PC-3 (cell line): ENCODE measurements at regions of chr11 and their contacts with region 1.

Region 1: DNA sequence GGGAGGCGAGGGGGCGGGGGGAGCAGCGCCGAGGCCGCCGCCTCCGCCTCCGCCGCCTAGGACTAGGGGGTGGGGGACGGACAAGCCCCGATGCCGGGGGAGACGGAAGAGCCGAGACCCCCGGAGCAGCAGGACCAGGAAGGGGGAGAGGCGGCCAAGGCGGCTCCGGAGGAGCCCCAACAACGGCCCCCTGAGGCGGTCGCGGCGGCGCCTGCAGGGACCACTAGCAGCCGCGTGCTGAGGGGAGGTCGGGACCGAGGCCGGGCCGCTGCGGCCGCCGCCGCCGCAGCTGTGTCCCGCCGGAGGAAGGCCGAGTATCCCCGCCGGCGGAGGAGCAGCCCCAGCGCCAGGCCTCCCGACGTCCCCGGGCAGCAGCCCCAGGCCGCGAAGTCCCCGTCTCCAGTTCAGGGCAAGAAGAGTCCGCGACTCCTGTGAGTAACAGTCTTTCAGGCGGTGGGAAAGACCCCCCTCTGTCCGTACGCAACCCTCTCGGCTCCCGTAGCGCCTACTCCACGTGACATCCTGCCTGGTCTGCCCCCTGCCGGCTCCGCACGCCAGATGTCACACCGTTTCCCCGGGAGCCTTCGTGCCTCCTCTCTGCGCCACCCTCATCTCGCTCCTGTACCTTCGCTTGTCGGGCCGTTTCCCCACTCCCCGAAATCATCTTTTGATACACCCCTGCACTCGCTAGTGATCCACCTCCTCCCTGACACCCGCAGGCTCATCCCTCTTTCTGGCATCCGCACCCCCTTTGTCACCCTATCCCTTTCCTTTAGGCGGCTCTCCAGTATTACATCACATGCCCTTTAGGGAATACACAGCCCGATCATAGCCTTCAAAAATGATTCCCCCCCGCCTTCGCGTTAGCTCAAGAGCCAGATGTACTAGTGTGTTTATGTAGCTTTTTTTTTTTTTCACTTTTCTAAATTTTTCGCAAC is 598 bp downstream of the ZFP91 start:
- DNase-seq: peak; percentile 89
- ATAC-seq: peak; percentile 45
- H3K4me3 ChIP-seq: peak overlapping the region; percentile 83
- H3K27ac ChIP-seq: peak overlapping the region; percentile 89
- H3K4me1 ChIP-seq: peaks cover 56% of the 10 kb centered on the region
- H3K27me3 ChIP-seq: no peaks in the 10 kb centered on the region
- CTCF ChIP-seq: peak; percentile 85

Region 2: DNA sequence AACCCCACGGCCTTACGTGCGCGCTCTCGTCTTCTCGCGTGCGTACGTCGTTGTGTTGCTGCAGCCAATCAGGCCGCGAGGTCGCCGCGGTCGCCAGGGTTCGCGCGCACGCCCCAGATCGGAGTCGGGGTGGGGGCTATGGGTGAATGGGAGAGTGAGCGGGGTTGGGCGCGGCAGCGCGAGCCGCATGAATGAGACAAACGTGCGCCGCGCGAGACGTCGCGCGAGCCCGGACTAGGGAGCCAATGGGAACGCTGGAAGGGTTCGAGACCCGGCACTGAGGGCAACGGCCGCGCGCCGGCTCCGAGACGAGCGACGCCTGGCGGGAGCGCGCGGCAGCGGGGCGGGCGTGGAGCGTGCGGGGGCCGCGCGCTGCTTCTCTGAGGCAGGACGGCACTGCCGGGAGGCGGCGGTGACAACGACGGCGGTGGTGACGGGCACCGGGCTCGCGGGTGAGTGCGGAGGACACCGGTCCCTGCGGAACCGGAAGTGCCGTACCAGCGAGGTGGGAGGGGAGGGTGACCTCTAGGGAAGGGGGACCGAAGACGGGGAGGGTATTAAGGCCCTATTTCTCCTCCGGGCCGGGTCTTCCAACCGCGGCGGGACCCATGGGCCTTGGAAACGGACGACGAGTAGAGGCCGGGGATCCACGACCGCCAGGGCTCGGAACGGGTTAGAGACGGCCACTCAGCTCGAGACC is 911.6 kb before region 1 on chr11 and contains the start of gene ZDHHC5:
- CTCF ChIA-PET with region 1: no interaction called
- POLR2A ChIA-PET with region 1: no interaction called
- intact Hi-C with region 1: loop called (anchors 1 kb)
- DNase-seq: peak; percentile 99
- ATAC-seq: peak; percentile 87
- H3K4me3 ChIP-seq: peak within 1 kb of the TSS; percentile 97
- H3K27ac ChIP-seq: peak within 1 kb of the TSS; percentile 88
- H3K4me1 ChIP-seq: peaks cover 16% of the 10 kb centered on the region
- H3K27me3 ChIP-seq: no peaks in the 10 kb centered on the region
- CTCF ChIP-seq: peak; percentile 39; the same call in 1 of the 2 replicates
- total RNA-seq, gene ZDHHC5: 86.7 and 102 TPM in 2 replicates

Region 3: DNA sequence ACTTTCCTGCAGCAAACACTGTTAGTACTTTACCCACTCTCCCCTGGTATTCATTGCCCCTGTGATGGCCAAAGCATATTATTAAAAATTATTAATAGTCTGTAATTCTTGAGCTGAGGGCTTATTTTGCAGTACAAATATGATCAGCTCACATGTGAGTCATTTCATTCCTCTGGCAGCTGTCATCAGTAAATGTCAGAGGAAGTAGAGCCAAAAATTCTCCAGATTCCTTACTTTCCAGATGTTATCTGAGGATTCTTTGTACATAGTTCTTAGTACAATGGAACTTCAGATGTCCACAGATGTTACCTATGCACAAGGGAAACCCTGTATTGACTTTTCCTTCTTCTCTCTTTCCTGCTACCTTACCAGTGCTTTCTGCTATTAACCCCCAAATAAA is 185.3 kb before region 1 on chr11:
- CTCF ChIA-PET with region 1: no interaction called
- POLR2A ChIA-PET with region 1: no interaction called
- intact Hi-C with region 1: loop called (anchors 5 kb)
- DNase-seq: peak; percentile 99
- ATAC-seq: peak; percentile 65
- H3K4me3 ChIP-seq: peak overlapping the region; percentile 36; the same call in 1 of the 2 replicates
- H3K27ac ChIP-seq: peak overlapping the region; percentile 89
- H3K4me1 ChIP-seq: peaks cover 55% of the 10 kb centered on the region
- H3K27me3 ChIP-seq: no peaks in the 10 kb centered on the region
- CTCF ChIP-seq: no peak

Region 4: GRCh38 chr11:58629857-58630256 is 50.4 kb after region 1 on chr11:
- CTCF ChIA-PET with region 1: interaction called, 3 read pairs
- POLR2A ChIA-PET with region 1: no interaction called
- intact Hi-C with region 1: loop called (anchors 1 kb)
- DNase-seq: peak; percentile 67
- ATAC-seq: peak; percentile 37
- H3K4me3 ChIP-seq: no peak overlapping the region
- H3K27ac ChIP-seq: no peak overlapping the region
- H3K4me1 ChIP-seq: peaks cover 35% of the 10 kb centered on the region
- H3K27me3 ChIP-seq: no peaks in the 10 kb centered on the region
- CTCF ChIP-seq: peak; percentile 91

Region 5: DNA sequence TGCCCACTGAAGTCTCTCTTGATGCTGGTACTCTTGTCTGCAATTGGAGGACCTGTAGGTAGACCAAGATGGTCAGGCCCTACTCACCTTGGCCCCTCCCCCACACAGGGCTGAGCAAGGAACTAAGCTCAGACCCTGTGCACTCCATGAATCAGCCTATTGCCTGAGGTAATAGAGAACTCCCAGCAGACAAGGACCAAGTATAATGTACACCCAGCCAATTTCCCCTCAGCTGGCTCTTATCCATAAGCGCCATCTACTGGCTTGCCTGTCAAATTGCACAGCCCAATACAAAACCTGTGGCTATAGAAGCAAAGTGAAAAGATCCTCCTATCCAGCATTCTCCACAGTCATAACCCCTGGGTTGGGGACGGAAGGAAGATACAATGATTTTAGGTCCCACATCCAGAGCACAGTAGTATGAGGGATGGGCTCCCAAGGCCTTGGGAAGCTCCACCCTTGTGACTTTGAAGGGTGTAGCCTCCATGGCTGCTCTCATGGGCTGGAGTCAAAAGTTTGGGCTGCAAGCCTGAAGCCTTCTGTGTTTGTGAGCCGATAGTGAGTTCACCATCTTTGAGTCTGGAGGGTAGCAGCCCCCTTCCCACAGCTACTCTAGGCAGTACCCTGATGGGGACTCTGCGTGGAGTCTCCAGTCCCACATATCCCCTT is 209.0 kb after region 1 on chr11:
- CTCF ChIA-PET with region 1: no interaction called
- POLR2A ChIA-PET with region 1: interaction called, 8 read pairs
- intact Hi-C with region 1: loop called (anchors 2 kb)
- DNase-seq: peak; percentile 91
- ATAC-seq: peak; percentile 91
- H3K4me3 ChIP-seq: no peak overlapping the region
- H3K27ac ChIP-seq: peak overlapping the region; percentile 69
- H3K4me1 ChIP-seq: peaks cover 7% of the 10 kb centered on the region
- H3K27me3 ChIP-seq: no peaks in the 10 kb centered on the region
- CTCF ChIP-seq: peak; percentile 98